MCF 10A (cell line): ENCODE measurements at regions of chr4 and their contacts with region 1.

Region 1: DNA sequence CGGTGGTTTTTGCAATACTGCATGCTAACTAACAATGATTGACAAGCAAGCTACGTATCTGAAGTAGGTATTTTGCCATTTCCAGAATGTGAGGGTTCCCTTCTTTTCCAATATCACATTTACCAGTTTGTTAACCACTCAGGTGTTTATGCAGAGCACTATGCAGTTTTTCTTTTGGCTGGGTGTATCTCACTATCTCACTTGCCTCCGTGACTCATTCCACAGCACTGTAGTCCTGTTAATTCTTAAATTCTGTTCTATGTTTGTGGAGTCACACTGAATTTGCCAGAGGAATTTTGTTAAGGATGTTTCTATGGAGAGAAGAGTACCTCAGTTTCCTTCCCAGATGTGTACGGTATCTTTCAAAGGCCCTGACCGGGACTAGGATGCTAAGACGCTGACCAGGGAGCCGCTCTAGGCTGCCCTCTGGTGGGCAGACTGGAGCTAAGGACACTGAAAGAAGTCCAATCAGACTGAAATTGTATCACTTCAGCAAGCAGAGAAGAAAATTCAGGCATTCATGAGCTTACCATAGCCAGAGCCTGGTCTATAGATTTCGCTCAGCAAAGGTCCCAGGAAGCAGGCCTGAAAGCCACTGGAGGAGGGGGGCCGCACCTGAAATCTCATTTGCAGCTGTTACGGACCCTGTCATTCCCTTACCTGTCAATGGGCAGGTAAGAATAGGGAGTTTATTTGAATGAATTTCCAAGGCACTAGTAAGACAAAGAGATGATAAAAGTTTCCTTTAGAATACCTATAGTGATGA is 388.4 kb upstream of the SPOCK3 start:
- DNase-seq: peak; percentile 66
- H3K4me3 Mint-ChIP-seq: no peak overlapping the region
- H3K27ac Mint-ChIP-seq: no peak overlapping the region
- H3K4me1 Mint-ChIP-seq: no peaks in the 10 kb centered on the region
- H3K27me3 Mint-ChIP-seq: no peaks in the 10 kb centered on the region
- CTCF ChIP-seq: peak; percentile 74

Region 2: DNA sequence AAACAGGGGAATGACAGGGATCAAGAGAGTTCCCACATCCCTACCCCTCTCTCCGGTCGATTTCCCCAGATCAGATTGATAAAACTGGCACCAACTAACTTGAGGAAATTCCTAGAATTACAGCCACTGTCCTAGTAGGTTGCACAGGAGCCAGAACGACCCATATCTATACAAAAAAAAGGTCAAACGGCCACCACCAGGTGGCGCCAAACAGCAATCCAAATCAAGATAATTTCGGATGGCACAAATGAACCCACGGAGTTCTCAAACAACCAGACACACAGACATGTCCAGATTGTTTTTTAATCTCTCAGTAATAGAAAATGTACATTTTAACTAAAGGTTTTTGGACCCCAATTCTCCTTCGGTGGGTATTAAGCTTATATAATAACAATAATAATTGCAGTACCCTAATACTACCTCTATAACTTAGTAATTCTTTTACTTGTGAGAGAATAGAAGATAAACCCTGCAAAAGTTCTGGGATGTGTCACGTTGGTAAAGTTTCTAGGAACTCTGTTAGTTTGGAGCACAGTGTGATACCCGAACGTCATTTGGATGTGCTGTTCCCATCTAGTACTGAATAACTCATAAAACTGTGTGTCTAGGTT is 601.0 kb before region 1 on chr4:
- CTCF ChIA-PET with region 1: interaction called, 10 read pairs
- POLR2A ChIA-PET with region 1: no interaction called
- intact Hi-C with region 1: loop called (anchors 1 kb)
- DNase-seq: peak; percentile 78
- H3K4me3 Mint-ChIP-seq: no peak overlapping the region
- H3K27ac Mint-ChIP-seq: no peak overlapping the region
- H3K4me1 Mint-ChIP-seq: peaks cover 5% of the 10 kb centered on the region
- H3K27me3 Mint-ChIP-seq: no peaks in the 10 kb centered on the region
- CTCF ChIP-seq: peak; percentile 82

Region 3: DNA sequence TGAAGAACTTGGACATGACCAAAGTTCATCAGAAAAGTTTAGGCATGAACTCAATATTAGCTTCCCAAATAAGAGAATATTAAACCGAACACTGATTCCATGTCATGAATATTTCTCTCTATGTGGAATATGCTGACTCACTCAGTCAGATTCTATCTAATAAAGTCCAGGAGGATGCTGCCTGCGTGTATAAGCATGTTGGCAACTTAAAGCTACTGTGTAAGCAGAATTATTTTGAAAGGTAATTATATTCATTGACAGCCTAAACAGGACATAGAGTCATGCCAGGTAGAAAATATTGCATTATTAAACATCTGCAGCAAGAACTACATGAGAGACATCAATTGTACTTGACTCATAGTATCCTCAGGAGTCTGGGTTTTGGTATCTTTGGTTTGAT is 20.5 kb before region 1 on chr4:
- CTCF ChIA-PET with region 1: interaction called, 22 read pairs
- POLR2A ChIA-PET with region 1: no interaction called
- intact Hi-C with region 1: no loop called
- DNase-seq: no peak
- H3K4me3 Mint-ChIP-seq: no peak overlapping the region
- H3K27ac Mint-ChIP-seq: peak overlapping the region; percentile 15
- H3K4me1 Mint-ChIP-seq: peaks cover 8% of the 10 kb centered on the region
- H3K27me3 Mint-ChIP-seq: no peaks in the 10 kb centered on the region
- CTCF ChIP-seq: no peak

Region 4: DNA sequence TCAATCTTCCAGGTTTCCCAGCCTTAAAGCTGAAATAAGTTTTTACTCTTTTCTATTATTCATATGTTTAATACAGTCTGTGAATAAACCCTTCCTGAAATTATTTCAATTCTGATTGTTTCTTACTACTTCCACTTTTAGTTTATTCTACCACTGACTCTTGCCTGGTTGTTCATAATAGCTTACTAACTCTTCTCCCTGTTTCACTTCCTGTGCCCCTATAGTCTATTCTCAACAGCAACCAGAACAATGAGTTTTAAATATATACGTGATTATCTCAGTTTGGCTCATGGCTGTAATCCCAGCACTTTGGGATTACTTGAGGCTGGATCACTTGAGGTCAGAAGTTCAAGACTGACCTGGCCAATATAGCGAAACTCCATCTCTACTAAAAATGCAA is 19.6 kb after region 1 on chr4:
- CTCF ChIA-PET with region 1: interaction called, 16 read pairs
- POLR2A ChIA-PET with region 1: no interaction called
- intact Hi-C with region 1: no loop called
- DNase-seq: no peak
- H3K4me3 Mint-ChIP-seq: no peak overlapping the region
- H3K27ac Mint-ChIP-seq: no peak overlapping the region
- H3K4me1 Mint-ChIP-seq: no peaks in the 10 kb centered on the region
- H3K27me3 Mint-ChIP-seq: no peaks in the 10 kb centered on the region
- CTCF ChIP-seq: no peak

Region 5: DNA sequence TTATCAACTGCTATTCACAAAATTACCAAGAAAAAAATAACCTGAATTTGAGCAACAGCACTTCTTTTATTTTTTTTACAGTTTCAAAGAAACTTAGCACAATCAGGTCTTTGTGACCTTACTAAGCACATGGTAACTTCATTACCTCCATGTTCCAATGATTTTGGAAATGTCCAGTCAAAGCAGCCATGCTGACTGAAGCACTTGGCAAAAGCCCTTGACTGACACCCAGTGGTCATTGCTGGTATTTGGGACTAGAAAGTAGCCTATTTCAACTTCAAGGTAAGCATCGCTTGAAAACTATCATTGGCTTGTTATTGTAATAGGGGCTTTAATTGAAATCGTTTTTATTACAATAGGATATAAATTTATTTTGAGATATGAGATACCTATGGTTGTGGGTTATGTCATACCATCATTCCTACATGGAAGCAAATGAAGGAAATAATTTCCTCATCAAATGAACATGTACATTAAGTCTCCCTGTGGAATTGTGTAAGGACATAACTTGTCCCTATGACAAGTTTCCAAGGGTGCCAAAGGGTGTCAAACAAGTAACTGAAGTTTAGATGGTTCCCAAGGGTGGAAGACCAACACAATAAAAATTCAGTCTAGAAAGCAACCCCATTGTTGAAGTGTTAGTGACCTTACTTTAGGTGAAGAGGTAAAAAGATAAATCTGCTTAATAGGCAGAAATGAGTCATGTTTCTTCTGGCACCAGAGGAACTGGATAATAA is 454.5 kb after region 1 on chr4:
- CTCF ChIA-PET with region 1: no interaction called
- POLR2A ChIA-PET with region 1: no interaction called
- intact Hi-C with region 1: loop called (anchors 1 kb)
- DNase-seq: peak; percentile 76
- H3K4me3 Mint-ChIP-seq: no peak overlapping the region
- H3K27ac Mint-ChIP-seq: no peak overlapping the region
- H3K4me1 Mint-ChIP-seq: no peaks in the 10 kb centered on the region
- H3K27me3 Mint-ChIP-seq: no peaks in the 10 kb centered on the region
- CTCF ChIP-seq: peak; percentile 94

Region 6: DNA sequence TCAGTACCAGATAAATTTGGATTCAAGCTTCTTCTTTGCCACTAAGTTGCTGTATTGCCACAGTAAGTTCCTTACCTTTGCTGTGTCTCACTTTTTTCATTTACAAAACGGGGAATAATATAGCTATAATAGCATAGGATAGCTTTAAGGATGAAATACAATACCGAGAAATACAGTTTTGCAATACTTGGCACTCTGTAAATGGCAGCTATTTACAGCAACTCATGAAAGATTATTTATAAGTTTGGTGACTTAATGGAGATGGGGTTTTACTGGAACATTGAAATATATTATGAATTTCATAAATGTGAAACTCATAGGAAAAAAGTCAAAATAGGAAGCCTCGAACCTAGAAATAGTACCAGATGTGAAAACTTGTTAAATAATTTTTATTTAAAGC is 497.2 kb after region 1 on chr4:
- CTCF ChIA-PET with region 1: interaction called, 10 read pairs
- POLR2A ChIA-PET with region 1: no interaction called
- intact Hi-C with region 1: no loop called
- DNase-seq: peak; percentile 24
- H3K4me3 Mint-ChIP-seq: no peak overlapping the region
- H3K27ac Mint-ChIP-seq: no peak overlapping the region
- H3K4me1 Mint-ChIP-seq: peaks cover 12% of the 10 kb centered on the region
- H3K27me3 Mint-ChIP-seq: no peaks in the 10 kb centered on the region
- CTCF ChIP-seq: no peak